PC-9 (cell line): ENCODE measurements at regions of chr7 and their contacts with region 1.

Region 1: GRCh38 chr7:4775250-4775847 is at the start of gene AP5Z1:
- DNase-seq: peak; percentile 93
- H3K4me3 ChIP-seq: peak within 1 kb of the TSS; percentile 82
- H3K27ac ChIP-seq: peak within 1 kb of the TSS; percentile 74
- H3K4me1 ChIP-seq: peaks cover 16% of the 10 kb centered on the region
- H3K27me3 ChIP-seq: no peaks in the 10 kb centered on the region
- CTCF ChIP-seq: no peak
- total RNA-seq, gene AP5Z1: 40.6 and 44.0 TPM in 2 replicates

Region 2: GRCh38 chr7:2851497-2851896 is 1923.9 kb before region 1 on chr7:
- CTCF ChIA-PET with region 1: no interaction called
- POLR2A ChIA-PET with region 1: interaction called, 12 read pairs
- intact Hi-C with region 1: no loop called
- DNase-seq: no peak
- H3K4me3 ChIP-seq: no peak overlapping the region
- H3K27ac ChIP-seq: no peak overlapping the region
- H3K4me1 ChIP-seq: 0 out of 2 replicates have a peak, but pooled peaks cover 6% of the 10 kb centered on the region
- H3K27me3 ChIP-seq: no peaks in the 10 kb centered on the region
- CTCF ChIP-seq: no peak

Region 3: GRCh38 chr7:4730971-4731370 is 44.4 kb before region 1 on chr7:
- CTCF ChIA-PET with region 1: no interaction called
- POLR2A ChIA-PET with region 1: interaction called, 16 read pairs
- intact Hi-C with region 1: no loop called
- DNase-seq: no peak
- H3K4me3 ChIP-seq: no peak overlapping the region
- H3K27ac ChIP-seq: no peak overlapping the region
- H3K4me1 ChIP-seq: no peaks in the 10 kb centered on the region
- H3K27me3 ChIP-seq: no peaks in the 10 kb centered on the region
- CTCF ChIP-seq: no peak

Region 4: DNA sequence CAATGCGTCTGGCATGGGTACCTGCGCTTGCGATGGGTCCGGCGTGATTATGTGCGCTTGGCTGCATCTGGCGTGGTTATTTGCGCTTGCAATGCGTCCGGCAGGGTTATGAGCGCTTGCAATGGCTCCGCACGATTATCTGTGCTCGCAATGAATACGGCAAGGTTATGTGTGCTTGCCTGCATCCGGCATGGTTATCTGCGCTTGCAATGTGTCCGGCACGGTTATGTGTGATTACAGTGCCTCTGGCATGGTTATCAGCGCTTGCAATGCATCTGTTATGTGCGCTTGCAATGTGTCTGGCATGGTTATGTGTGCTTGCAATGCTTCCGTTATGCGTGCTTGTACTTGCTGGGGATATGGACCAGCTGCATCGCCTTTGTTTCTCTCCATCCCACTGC is 308.0 kb after region 1 on chr7:
- CTCF ChIA-PET with region 1: no interaction called
- POLR2A ChIA-PET with region 1: no interaction called
- intact Hi-C with region 1: loop called (anchors 2 kb)
- DNase-seq: no peak
- H3K4me3 ChIP-seq: no peak overlapping the region
- H3K27ac ChIP-seq: no peak overlapping the region
- H3K4me1 ChIP-seq: no peaks in the 10 kb centered on the region
- H3K27me3 ChIP-seq: peaks cover 27% of the 10 kb centered on the region; the same call in 1 of the 2 replicates
- CTCF ChIP-seq: no peak

Region 5: GRCh38 chr7:5177060-5177459 is 401.7 kb after region 1 on chr7:
- CTCF ChIA-PET with region 1: no interaction called
- POLR2A ChIA-PET with region 1: interaction called, 3 read pairs
- intact Hi-C with region 1: loop called (anchors 10 kb)
- DNase-seq: peak; percentile 54 to 72
- H3K4me3 ChIP-seq: 0 out of 2 replicates have a peak overlapping the region, but pooled peaks have one; percentile 10
- H3K27ac ChIP-seq: no peak overlapping the region
- H3K4me1 ChIP-seq: no peaks in the 10 kb centered on the region
- H3K27me3 ChIP-seq: peaks cover 36% of the 10 kb centered on the region
- CTCF ChIP-seq: no peak

Region 6: GRCh38 chr7:5248201-5248885 is 473.0 kb after region 1 on chr7:
- CTCF ChIA-PET with region 1: interaction called, 11 read pairs
- POLR2A ChIA-PET with region 1: no interaction called
- intact Hi-C with region 1: no loop called
- DNase-seq: no peak
- H3K4me3 ChIP-seq: no peak overlapping the region
- H3K27ac ChIP-seq: no peak overlapping the region
- H3K4me1 ChIP-seq: peaks cover 9% of the 10 kb centered on the region
- H3K27me3 ChIP-seq: peaks cover 6% of the 10 kb centered on the region; the same call in 1 of the 2 replicates
- CTCF ChIP-seq: no peak